ENCODE measurements at regions of chr19 and their contacts with region 1.

Region 1: DNA sequence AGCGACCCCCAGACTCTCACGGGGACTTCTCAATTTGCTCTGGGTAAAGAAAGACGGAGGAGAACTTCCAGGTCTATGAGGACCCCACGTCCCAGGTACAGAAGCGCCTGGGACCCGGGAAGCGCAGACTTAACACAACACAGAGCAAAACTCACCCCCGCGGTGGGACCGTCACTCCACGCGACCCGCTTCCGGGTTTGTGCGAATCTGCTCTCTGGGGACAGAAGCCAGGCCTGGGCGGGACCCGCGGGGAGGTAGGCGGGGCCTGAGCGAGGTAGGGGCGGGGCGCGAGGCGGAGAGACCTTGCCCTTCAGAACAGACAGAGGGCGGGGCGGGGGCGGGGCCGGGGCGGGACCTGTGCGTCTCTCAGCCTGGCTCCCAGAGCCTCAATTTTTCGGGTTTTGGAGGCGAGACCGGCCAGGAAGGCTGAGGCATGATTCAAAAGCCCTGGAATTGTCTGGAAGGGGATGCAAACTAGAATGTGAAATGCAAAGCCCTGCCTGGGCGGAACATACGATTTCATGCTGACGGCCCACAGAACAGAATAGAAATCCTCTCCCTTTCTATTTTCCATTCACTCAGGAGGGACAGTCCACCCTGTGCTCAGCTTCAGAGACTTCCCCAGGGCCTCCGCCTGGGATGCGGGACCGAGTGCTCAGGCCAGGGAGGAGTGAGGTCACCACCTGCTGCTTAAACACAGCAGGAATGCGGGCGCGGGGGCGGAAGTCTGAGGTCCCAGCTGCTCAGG is 19.3 kb upstream of the ZNF888 start:
- DNase-seq: peak; percentile 81 to 99
- H3K4me3 ChIP-seq: peak overlapping the region; percentile 64
- H3K27ac ChIP-seq: peak overlapping the region; percentile 28; the same call in 1 of the 2 replicates
- H3K4me1 ChIP-seq: peaks cover 26% of the 10 kb centered on the region
- H3K27me3 ChIP-seq: no peaks in the 10 kb centered on the region
- CTCF ChIP-seq: no peak

Region 2: DNA sequence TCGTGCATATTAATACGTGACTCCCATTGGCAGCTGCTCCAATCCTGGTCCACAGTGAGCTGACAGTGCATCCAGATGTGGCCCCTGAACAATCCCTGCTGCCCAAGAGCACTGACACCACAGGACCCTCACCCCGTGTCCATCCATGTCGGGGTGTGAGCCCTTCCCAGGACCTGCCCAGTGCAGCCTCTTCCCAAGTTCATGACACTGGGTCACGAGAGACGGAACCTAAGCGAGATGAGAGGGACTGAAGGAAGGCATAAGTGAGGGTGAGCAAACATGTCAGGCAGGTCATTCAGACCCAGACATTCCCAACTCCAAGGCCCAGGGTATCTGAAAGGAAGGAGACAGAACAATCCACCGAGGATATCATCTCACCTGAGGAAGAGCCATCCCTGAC is 88.7 kb before region 1 on chr19:
- CTCF ChIA-PET with region 1: no interaction called
- POLR2A ChIA-PET with region 1: no interaction called
- intact Hi-C with region 1: loop called (anchors 2 kb)
- DNase-seq: no peak
- H3K4me3 ChIP-seq: no peak overlapping the region
- H3K27ac ChIP-seq: no peak overlapping the region
- H3K4me1 ChIP-seq: no peaks in the 10 kb centered on the region; the same call in 1 of the 2 replicates
- H3K27me3 ChIP-seq: no peaks in the 10 kb centered on the region
- CTCF ChIP-seq: no peak

Region 3: DNA sequence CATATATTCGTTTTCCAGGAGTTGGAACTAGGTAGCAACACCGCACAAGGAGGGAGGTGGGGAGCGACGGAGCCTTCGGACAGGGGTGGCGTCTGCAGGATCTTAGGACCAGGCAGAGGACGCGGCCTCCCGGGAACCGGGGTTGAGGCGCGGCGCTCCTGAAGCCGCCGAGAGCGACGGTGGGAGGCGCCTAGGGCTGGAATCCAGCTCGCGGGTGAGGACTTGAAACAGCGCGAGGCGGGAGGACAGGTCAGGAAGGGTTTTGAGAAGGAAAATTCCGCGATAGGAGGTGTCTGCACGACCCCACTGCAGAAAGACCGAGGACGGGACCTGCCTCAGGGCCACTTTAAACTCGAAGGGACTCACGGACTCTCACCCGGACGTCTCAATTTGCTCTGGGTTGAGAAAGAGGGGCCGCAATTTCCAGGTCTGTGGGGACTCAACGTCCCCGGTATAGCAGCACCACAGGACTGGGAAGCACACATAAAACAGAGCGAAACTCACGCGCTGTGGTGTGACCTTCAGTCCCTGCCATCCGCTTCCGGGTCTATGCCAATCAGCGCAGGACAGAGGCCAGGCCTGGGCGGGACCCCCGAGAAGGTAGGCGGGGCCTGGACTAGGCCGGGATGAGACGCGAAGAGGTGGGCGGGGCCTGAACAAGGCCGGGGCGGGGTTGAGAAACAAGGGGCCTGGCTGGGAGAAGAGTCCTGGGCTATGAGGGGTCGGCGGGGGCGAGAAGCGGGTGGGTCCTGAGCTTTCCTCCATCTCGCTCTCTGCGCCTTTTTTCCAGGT is 45.2 kb before region 1 on chr19 and contains the start of gene ZNF320:
- CTCF ChIA-PET with region 1: no interaction called
- POLR2A ChIA-PET with region 1: interaction called, 3 read pairs
- intact Hi-C with region 1: loop called (anchors 1 kb)
- DNase-seq: peak; percentile 86 to 97
- H3K4me3 ChIP-seq: peak within 1 kb of the TSS; percentile 84
- H3K27ac ChIP-seq: peak within 1 kb of the TSS; percentile 86
- H3K4me1 ChIP-seq: peaks cover 9% of the 10 kb centered on the region; the same call in 1 of the 2 replicates
- H3K27me3 ChIP-seq: no peaks in the 10 kb centered on the region
- CTCF ChIP-seq: no peak
- total RNA-seq, gene ZNF320: 18.5 and 24.9 TPM in 2 replicates

Region 4: GRCh38 chr19:52922841-52923777 is 19.5 kb before region 1 on chr19 and contains the start of gene ZNF888:
- CTCF ChIA-PET with region 1: no interaction called
- POLR2A ChIA-PET with region 1: interaction called, 4 read pairs
- intact Hi-C with region 1: loop called (anchors 2 kb)
- DNase-seq: peak; percentile 75 to 91
- H3K4me3 ChIP-seq: peak within 1 kb of the TSS; percentile 96
- H3K27ac ChIP-seq: peak within 1 kb of the TSS; percentile 82
- H3K4me1 ChIP-seq: 0 out of 2 replicates have a peak, but pooled peaks cover 6% of the 10 kb centered on the region
- H3K27me3 ChIP-seq: no peaks in the 10 kb centered on the region
- CTCF ChIP-seq: no peak
- total RNA-seq, gene ZNF888: 10.8 and 14.5 TPM in 2 replicates

Region 5: GRCh38 chr19:52962394-52963246 is 20.1 kb after region 1 on chr19 and contains the start of gene ZNF816:
- CTCF ChIA-PET with region 1: no interaction called
- POLR2A ChIA-PET with region 1: interaction called, 3 read pairs
- intact Hi-C with region 1: loop called (anchors 2 kb)
- DNase-seq: peak; percentile 89 to 99
- H3K4me3 ChIP-seq: peak within 1 kb of the TSS; percentile 83
- H3K27ac ChIP-seq: peak within 1 kb of the TSS; percentile 32
- H3K4me1 ChIP-seq: peaks cover 15% of the 10 kb centered on the region
- H3K27me3 ChIP-seq: no peaks in the 10 kb centered on the region
- CTCF ChIP-seq: no peak
- total RNA-seq, gene ZNF816: 11.8 and 13.8 TPM in 2 replicates

Region 6: GRCh38 chr19:52974701-52975100 is 32.1 kb after region 1 on chr19:
- CTCF ChIA-PET with region 1: no interaction called
- POLR2A ChIA-PET with region 1: no interaction called
- intact Hi-C with region 1: no loop called
- DNase-seq: no peak
- H3K4me3 ChIP-seq: no peak overlapping the region
- H3K27ac ChIP-seq: no peak overlapping the region
- H3K4me1 ChIP-seq: no peaks in the 10 kb centered on the region
- H3K27me3 ChIP-seq: no peaks in the 10 kb centered on the region
- CTCF ChIP-seq: no peak

Region 7: DNA sequence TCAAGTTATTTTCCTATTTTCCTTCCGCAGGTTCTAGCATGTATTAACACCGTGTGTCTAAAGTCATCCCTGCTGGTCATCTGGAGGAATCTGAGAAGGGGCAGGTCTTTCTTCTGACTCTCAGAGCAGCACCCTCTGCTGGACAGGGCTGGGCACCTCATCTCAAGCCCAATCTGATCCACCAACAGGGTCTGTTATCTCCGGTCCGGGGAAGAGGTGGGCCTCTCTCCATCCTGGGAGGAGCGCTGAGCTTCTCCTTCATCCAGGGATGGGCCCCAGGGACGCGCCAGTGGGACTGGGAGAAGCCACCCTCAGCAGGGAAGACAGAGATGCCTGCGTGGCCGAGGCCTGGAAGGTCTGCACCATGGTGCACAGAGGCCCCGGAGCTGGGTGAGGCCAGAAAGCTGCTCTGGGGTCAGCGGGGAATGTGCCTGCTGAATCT is 569.4 kb after region 1 on chr19:
- CTCF ChIA-PET with region 1: no interaction called
- POLR2A ChIA-PET with region 1: no interaction called
- intact Hi-C with region 1: no loop called
- DNase-seq: peak; percentile 29 to 44
- H3K4me3 ChIP-seq: no peak overlapping the region
- H3K27ac ChIP-seq: no peak overlapping the region
- H3K4me1 ChIP-seq: no peaks in the 10 kb centered on the region
- H3K27me3 ChIP-seq: no peaks in the 10 kb centered on the region
- CTCF ChIP-seq: peak; percentile 69

Measured in PC-9 (cell line).